AG04450 (cell line): ENCODE measurements at regions of chr13 and their contacts with region 1.

Region 1: DNA sequence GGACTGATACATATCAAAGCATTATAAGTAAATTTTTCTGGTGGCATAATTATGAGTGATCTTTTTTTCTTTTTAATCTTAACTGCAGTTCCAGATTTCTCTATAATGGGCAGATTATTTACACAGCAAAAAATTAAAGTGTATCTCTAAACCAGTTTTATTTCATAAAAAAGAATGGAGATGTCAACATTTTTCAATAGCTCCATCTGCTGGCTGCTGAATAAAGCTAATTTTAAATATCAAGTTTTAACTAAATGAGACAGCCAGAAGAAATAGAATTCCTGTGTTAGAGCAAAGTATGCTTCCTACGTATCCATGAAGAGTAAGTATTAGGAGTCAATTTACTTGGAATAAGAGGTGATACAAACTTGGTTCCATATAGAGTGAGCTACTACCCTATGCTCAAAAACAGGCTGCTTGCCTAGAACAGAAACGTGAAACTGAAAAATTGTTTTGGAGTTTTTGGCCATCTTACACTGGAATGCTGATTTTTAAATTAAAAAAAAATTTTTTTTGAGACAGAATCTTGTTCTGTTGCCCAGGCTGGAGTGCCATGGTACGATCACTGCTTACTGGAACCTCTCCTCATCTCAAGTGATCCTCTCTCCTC is 5.0 kb upstream of the PDS5B start:
- DNase-seq: no peak
- H3K4me3 ChIP-seq: no peak overlapping the region
- H3K27ac ChIP-seq: no peak overlapping the region
- H3K27me3 ChIP-seq: no peaks in the 10 kb centered on the region
- CTCF ChIP-seq: peak; percentile 57

Region 2: GRCh38 chr13:31824705-31825517 is 756.4 kb before region 1 on chr13:
- CTCF ChIA-PET with region 1: interaction called, 11 read pairs
- POLR2A ChIA-PET with region 1: no interaction called
- DNase-seq: no peak
- H3K4me3 ChIP-seq: no peak overlapping the region
- H3K27ac ChIP-seq: no peak overlapping the region
- H3K27me3 ChIP-seq: no peaks in the 10 kb centered on the region
- CTCF ChIP-seq: peak; percentile 18; the same call in 1 of the 2 replicates

Region 3: GRCh38 chr13:32019612-32020233 is 561.6 kb before region 1 on chr13:
- CTCF ChIA-PET with region 1: interaction called, 15 read pairs
- POLR2A ChIA-PET with region 1: no interaction called
- DNase-seq: peak; percentile 63
- H3K4me3 ChIP-seq: no peak overlapping the region
- H3K27ac ChIP-seq: no peak overlapping the region
- H3K27me3 ChIP-seq: no peaks in the 10 kb centered on the region
- CTCF ChIP-seq: peak; percentile 94

Region 4: GRCh38 chr13:32381539-32381938 is 199.7 kb before region 1 on chr13:
- CTCF ChIA-PET with region 1: interaction called, 62 read pairs
- POLR2A ChIA-PET with region 1: no interaction called
- DNase-seq: no peak
- H3K4me3 ChIP-seq: no peak overlapping the region
- H3K27ac ChIP-seq: no peak overlapping the region
- H3K27me3 ChIP-seq: no peaks in the 10 kb centered on the region
- CTCF ChIP-seq: peak; percentile 64